ENCODE measurements at regions of chr20 and their contacts with region 1.

Region 1: GRCh38 chr20:18466894-18467730 is at the starts of genes DZANK1 and POLR3F:
- DNase-seq: peak; percentile 85 to 93 (median 92)
- ATAC-seq: peak; percentile 97
- H3K4me3 ChIP-seq: peak within 1 kb of the TSS; percentile 93
- H3K4me3 Mint-ChIP-seq: peak within 1 kb of the TSS; percentile 89 to 99 (median 97)
- H3K27ac ChIP-seq: peak within 1 kb of the TSS; percentile 77
- H3K27ac Mint-ChIP-seq: peak within 1 kb of the TSS; percentile 93 to 99 (median 98)
- H3K4me1 ChIP-seq: peaks cover 7 to 14% of the 10 kb centered on the region in 2 donors
- H3K4me1 Mint-ChIP-seq: peaks cover 25 to 44% (median 37%) of the 10 kb centered on the region in 7 donors
- H3K27me3 ChIP-seq: no peaks in the 10 kb centered on the region
- H3K27me3 Mint-ChIP-seq: no peaks in the 10 kb centered on the region
- total RNA-seq, gene DZANK1: 1.2 to 3.5 (median 2.9) TPM
- total RNA-seq, gene POLR3F: 5.0 to 13.5 (median 11.5) TPM

Region 2: GRCh38 chr20:18137412-18138265 is 329.5 kb before region 1 on chr20 and contains the starts of genes KAT14 and PET117:
- CTCF ChIA-PET with region 1: no interaction called
- POLR2A ChIA-PET with region 1: no interaction called
- intact Hi-C with region 1: loop called (anchors 1 to 2 kb)
- DNase-seq: peak; percentile 85 to 96 (median 93)
- ATAC-seq: peak; percentile 98
- H3K4me3 ChIP-seq: peak within 1 kb of the TSS; percentile 99
- H3K4me3 Mint-ChIP-seq: peak within 1 kb of the TSS; percentile 76 to 92 (median 88)
- H3K27ac ChIP-seq: peak within 1 kb of the TSS; percentile 89
- H3K27ac Mint-ChIP-seq: peak within 1 kb of the TSS; percentile 85 to 95 (median 92)
- H3K4me1 ChIP-seq: peaks cover 13 to 15% of the 10 kb centered on the region in 2 donors
- H3K4me1 Mint-ChIP-seq: peaks cover 23 to 44% (median 31%) of the 10 kb centered on the region in 7 donors
- H3K27me3 ChIP-seq: no peaks in the 10 kb centered on the region
- H3K27me3 Mint-ChIP-seq: peaks cover 0 to 7% (median 0%) of the 10 kb centered on the region in 5 donors
- total RNA-seq, gene KAT14: 12.3 to 26.7 (median 16.2) TPM
- total RNA-seq, gene PET117: 9.0 to 20.3 (median 11.7) TPM

Region 3: DNA sequence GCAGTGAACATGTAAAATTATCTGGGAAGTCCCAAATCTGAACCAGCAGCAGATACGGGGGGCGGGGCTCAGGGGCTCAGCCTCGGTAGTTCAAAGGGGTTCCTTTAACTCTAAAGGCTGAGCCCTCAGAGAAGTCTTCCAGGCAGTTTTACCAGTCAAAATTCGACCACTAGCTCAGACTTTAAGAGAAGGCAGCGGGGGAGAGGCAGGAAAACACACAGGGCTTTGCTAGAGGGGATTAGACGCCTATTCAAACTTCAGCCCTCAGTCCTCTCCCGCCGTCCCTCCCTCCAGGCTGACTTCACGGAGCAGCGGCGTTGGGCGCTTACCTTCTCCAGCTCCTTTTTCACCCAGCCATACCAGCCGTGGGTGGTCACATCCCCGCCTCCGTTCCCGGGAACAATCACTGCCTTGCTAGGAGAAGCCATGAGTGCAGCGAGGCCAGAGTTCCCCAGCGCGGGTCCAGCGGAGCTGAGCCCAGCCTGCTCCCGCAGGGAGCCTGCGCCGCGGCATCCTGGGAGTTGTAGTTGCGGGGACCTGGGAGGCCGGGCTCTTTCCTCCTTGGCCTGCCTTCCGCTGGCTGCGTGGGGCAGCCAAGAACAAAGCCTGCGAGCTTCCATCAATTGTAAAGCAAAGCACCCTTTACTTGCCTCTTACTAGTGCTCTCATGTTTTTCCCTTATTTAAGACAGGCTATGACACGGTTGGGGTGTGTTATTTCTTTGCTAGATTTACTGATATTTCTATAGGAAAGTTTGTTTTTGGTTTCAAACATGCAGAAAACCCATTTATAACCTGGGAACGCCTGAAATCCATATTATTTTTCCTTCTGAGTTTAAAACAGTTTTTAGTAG is 29.9 kb after region 1 on chr20 and contains the start of gene RBBP9:
- CTCF ChIA-PET with region 1: interaction called, 9 read pairs
- POLR2A ChIA-PET with region 1: interaction called, 25 read pairs
- intact Hi-C with region 1: loop called (anchors 1 kb)
- DNase-seq: peak; percentile 58 to 77 (median 68)
- ATAC-seq: peak; percentile 98
- H3K4me3 ChIP-seq: peak within 1 kb of the TSS; percentile 98
- H3K4me3 Mint-ChIP-seq: peak within 1 kb of the TSS; percentile 92 to 99 (median 96)
- H3K27ac ChIP-seq: peak within 1 kb of the TSS; percentile 91
- H3K27ac Mint-ChIP-seq: peak within 1 kb of the TSS; percentile 62 to 96 (median 94)
- H3K4me1 ChIP-seq: peaks cover 5 to 7% of the 10 kb centered on the region in 2 donors
- H3K4me1 Mint-ChIP-seq: peaks cover 10 to 25% (median 22%) of the 10 kb centered on the region in 7 donors
- H3K27me3 ChIP-seq: no peaks in the 10 kb centered on the region
- H3K27me3 Mint-ChIP-seq: peaks cover 0 to 3% (median 3%) of the 10 kb centered on the region in 5 donors
- total RNA-seq, gene RBBP9: 4.9 to 16.4 (median 6.1) TPM

Region 4: GRCh38 chr20:18587665-18588573 is 120.8 kb after region 1 on chr20 and contains the start of gene DTD1:
- CTCF ChIA-PET with region 1: no interaction called
- POLR2A ChIA-PET with region 1: no interaction called
- intact Hi-C with region 1: loop called (anchors 1 to 2 kb)
- DNase-seq: peak; percentile 29 to 93 (median 53)
- ATAC-seq: peak; percentile 92
- H3K4me3 ChIP-seq: peak within 1 kb of the TSS; percentile 68
- H3K4me3 Mint-ChIP-seq: peak within 1 kb of the TSS; percentile 83 to 99 (median 91)
- H3K27ac ChIP-seq: peak within 1 kb of the TSS; percentile 74
- H3K27ac Mint-ChIP-seq: peak within 1 kb of the TSS; percentile 80 to 94 (median 91)
- H3K4me1 ChIP-seq: peaks cover 0 to 4% of the 10 kb centered on the region in 2 donors
- H3K4me1 Mint-ChIP-seq: peaks cover 16 to 39% (median 27%) of the 10 kb centered on the region in 7 donors
- H3K27me3 ChIP-seq: no peaks in the 10 kb centered on the region
- H3K27me3 Mint-ChIP-seq: peaks cover 0 to 11% (median 9%) of the 10 kb centered on the region in 5 donors
- total RNA-seq, gene DTD1: 12.7 to 24.4 (median 16.6) TPM

Measured in naive thymus-derived CD4-positive, alpha-beta T cell (primary cell).